Dendritic cell treated with granulocyte-macrophage colony-stimulating factor and Interleukin-4, amounts not matched to agents 40 ng/mL and 50 ng/mL, for 4 days (primary cell): ENCODE measurements at regions of chr2 and their contacts with region 1.

Region 1: GRCh38 chr2:174682578-174683391 is 81.5 kb downstream of the CHRNA1 start:
- H3K4me3 Mint-ChIP-seq: peak overlapping the region; percentile 78
- H3K27ac Mint-ChIP-seq: peak overlapping the region; percentile 82
- H3K4me1 Mint-ChIP-seq: peaks cover 70% of the 10 kb centered on the region
- H3K27me3 Mint-ChIP-seq: peaks cover 4% of the 10 kb centered on the region

Region 2: GRCh38 chr2:174593574-174594203 is 89.1 kb before region 1 on chr2:
- intact Hi-C with region 1: loop called (anchors 5 kb)
- H3K4me3 Mint-ChIP-seq: peak overlapping the region; percentile 70
- H3K27ac Mint-ChIP-seq: peak overlapping the region; percentile 92
- H3K4me1 Mint-ChIP-seq: peaks cover 53% of the 10 kb centered on the region
- H3K27me3 Mint-ChIP-seq: no peaks in the 10 kb centered on the region